AG04449 (cell line): ENCODE measurements at regions of chr3 and their contacts with region 1.

Region 1: GRCh38 chr3:27659279-27660021 is 62.7 kb downstream of the EOMES start:
- DNase-seq: no peak
- H3K4me3 ChIP-seq: no peak overlapping the region
- CTCF ChIP-seq: peak; percentile 75

Region 2: DNA sequence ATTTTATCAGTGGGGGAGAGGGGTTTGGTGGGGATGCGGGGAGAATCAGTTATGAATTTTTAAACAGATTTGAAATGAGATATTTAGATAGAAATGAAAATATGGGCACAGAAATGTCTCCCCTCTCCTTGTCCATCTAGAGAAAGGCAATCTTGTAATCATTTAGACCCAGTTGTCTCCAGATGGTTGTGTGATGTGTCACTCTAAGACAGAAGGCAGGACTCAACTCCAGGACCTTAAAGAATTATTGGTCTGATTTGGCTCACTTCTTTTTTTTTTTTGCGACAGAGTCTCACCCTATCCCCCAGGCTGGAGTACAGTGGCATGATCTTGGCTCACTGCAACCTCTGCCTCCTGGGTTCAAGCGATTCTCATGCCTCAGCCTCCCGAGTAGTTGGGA is 14.5 kb before region 1 on chr3:
- CTCF ChIA-PET with region 1: interaction called, 73 read pairs
- POLR2A ChIA-PET with region 1: no interaction called
- DNase-seq: no peak
- H3K4me3 ChIP-seq: no peak overlapping the region
- CTCF ChIP-seq: no peak